ENCODE measurements at regions of chr5 and their contacts with region 1.

Region 1: DNA sequence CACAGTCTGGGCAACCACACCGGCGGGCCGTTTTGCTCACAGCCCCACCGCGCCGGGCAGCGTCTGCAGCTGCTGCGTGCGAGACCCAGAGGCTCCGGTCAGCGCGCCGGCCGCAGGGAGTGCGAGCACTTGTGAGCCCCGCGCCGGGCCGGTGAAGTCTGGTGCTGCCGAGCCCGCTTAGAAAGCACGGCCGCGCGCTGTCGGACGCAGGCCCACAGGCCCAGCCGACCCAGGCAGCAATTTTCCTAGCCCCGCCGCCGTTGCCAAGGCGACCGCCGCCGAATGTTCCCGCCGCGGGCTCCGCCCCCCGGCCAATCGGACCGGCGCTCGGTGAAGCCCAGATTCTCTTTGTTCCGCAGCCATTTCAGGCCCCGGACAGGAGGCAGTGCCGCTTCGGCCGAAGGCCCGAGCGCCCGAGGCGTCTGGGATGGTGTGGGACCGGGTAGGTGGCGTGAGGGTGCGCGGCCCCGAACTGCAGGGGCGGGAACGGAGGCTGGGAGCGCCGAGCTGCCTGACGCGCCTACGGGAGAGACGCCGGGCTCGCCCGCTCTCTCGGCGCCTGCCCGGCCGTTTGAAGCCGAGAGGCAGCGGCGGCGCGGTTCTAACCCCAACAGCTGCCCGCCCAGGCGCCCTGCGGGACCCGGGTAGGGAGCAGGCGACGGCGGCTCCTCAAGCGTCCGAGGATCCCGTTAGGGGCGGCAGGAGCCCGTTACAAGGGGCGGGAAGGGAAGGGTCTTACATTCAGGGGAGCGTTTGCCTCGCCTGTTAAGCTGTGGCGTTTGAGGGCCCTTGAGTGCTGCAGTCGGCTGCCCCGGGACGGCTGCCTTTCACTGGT is at the start of gene TNPO1:
- DNase-seq: peak; percentile 96
- H3K4me3 ChIP-seq: peak within 1 kb of the TSS; percentile 92 to 100 (median 100)
- H3K27ac ChIP-seq: peak within 1 kb of the TSS; percentile 98
- H3K4me1 ChIP-seq: peaks cover 43% of the 10 kb centered on the region
- H3K27me3 ChIP-seq: no peaks in the 10 kb centered on the region
- CTCF ChIP-seq: no peak
- POLR2A ChIP-seq: peak; percentile 99
- total RNA-seq, gene TNPO1: 242 and 298 TPM in 2 replicates

Region 2: DNA sequence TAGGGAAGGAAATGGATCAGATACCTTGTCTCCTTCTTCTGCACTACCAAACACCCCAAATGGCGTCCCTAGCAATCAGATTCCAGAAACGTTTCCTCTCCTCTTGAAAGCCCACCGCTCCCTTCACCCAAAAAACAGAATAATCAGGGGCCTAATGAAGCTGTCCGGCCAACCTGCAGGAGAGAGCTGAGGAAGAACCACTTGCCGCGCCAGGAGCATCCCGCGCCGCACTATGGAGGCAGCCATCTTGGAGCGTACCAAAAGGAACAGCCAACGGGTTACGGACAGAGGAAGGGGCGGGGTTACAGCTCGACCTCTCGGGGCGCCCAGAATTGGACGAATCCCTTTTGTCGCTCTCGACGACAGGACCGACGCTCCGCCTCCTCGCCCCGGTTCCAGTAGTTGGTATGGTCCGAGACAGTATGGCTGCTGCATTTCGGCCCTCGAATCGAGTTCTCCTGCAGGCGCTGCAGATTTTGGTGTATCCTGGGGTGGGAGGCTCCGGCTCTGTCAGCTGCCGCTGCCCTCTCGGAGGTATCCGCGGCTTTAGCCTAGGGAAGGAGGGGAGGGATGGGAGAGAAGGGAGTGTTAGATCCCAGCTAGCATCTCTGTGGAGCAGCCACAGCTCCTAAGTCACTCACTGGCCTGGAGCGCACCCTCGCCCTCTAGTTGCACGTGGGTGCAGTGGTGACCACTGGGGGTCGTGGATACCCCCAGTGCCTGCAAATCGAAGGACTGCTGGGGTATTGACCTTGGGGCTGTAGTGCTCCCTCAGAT is 496.4 kb before region 1 on chr5 and contains the starts of genes MRPS27 and PTCD2:
- CTCF ChIA-PET with region 1: interaction called, 5 read pairs
- POLR2A ChIA-PET with region 1: interaction called, 3 read pairs
- dilution Hi-C with region 1: no loop called
- intact Hi-C with region 1: loop called (anchors 1 kb)
- DNase-seq: peak; percentile 98
- H3K4me3 ChIP-seq: peak within 1 kb of the TSS; percentile 49 to 80 (median 70)
- H3K27ac ChIP-seq: peak within 1 kb of the TSS; percentile 14
- H3K4me1 ChIP-seq: peaks cover 6% of the 10 kb centered on the region
- H3K27me3 ChIP-seq: no peaks in the 10 kb centered on the region
- CTCF ChIP-seq: peak; percentile 8 to 28
- POLR2A ChIP-seq: peak; percentile 97
- total RNA-seq, gene MRPS27: 58.0 and 67.1 TPM in 2 replicates
- total RNA-seq, gene PTCD2: 6.2 and 6.7 TPM in 2 replicates

Region 3: GRCh38 chr5:72597456-72597948 is 219.0 kb before region 1 on chr5:
- CTCF ChIA-PET with region 1: interaction called, 22 read pairs
- POLR2A ChIA-PET with region 1: no interaction called
- dilution Hi-C with region 1: loop called (anchors 25 kb)
- intact Hi-C with region 1: no loop called
- DNase-seq: peak; percentile 94
- H3K4me3 ChIP-seq: no peak overlapping the region
- H3K27ac ChIP-seq: peak overlapping the region; percentile 88
- H3K4me1 ChIP-seq: peaks cover 60% of the 10 kb centered on the region
- H3K27me3 ChIP-seq: no peaks in the 10 kb centered on the region
- CTCF ChIP-seq: no peak
- POLR2A ChIP-seq: no peak

Region 4: GRCh38 chr5:72611118-72611730 is 205.3 kb before region 1 on chr5:
- CTCF ChIA-PET with region 1: interaction called, 134 read pairs
- POLR2A ChIA-PET with region 1: interaction called, 7 read pairs
- dilution Hi-C with region 1: no loop called
- intact Hi-C with region 1: loop called (anchors 1 kb)
- DNase-seq: peak; percentile 85
- H3K4me3 ChIP-seq: no peak overlapping the region
- H3K27ac ChIP-seq: peak overlapping the region; percentile 23
- H3K4me1 ChIP-seq: peaks cover 5% of the 10 kb centered on the region
- H3K27me3 ChIP-seq: no peaks in the 10 kb centered on the region
- CTCF ChIP-seq: peak; percentile 98
- POLR2A ChIP-seq: no peak

Region 5: DNA sequence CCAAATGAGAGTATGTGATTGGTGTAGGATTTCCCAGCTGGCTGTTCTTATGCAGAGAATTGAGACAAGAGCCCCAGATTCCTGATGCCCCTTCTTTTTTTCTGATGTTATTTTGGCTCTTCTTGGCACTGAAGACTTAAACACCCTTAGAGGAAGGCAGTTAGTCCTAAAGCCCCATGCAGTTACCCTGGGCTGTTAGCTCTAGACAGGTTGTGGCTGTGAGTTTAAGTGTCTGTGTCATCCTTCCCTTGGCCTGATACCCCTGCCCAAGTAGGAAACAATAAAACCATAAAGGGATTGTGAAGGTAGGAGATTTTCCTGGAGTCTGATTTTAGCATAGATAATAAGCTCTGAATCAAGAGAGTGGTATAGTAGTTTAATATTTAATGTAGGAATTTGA is 13.2 kb after region 1 on chr5:
- CTCF ChIA-PET with region 1: interaction called, 23 read pairs
- POLR2A ChIA-PET with region 1: no interaction called
- dilution Hi-C with region 1: no loop called
- intact Hi-C with region 1: no loop called
- DNase-seq: no peak
- H3K4me3 ChIP-seq: no peak overlapping the region
- H3K27ac ChIP-seq: no peak overlapping the region
- H3K4me1 ChIP-seq: peaks cover 10% of the 10 kb centered on the region
- H3K27me3 ChIP-seq: no peaks in the 10 kb centered on the region
- CTCF ChIP-seq: no peak
- POLR2A ChIP-seq: no peak

Region 6: DNA sequence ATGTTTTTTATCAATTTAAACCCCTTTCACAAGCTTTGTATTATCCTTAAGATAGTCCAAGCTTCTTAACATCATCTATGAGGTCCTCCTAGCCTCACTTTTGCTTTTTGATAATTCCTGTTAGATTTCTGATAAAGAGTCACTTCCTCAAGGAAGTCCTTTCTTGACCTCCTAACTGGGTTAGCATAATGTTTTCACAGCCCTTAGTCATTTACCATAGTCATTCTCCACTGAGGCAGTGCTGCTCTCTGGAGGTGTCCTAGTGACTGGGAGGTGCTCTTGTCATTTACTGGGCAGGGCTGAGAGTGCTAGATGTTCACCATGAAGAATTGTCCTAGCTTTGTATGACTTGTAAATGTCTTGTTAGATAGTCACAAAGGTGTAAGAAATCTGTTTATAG is 26.3 kb after region 1 on chr5:
- CTCF ChIA-PET with region 1: interaction called, 37 read pairs
- POLR2A ChIA-PET with region 1: interaction called, 4 read pairs
- dilution Hi-C with region 1: no loop called
- intact Hi-C with region 1: loop called (anchors 2 kb)
- DNase-seq: peak; percentile 92
- H3K4me3 ChIP-seq: peak overlapping the region in 1 of 3 experiments; percentile 25
- H3K27ac ChIP-seq: peak overlapping the region; percentile 95
- H3K4me1 ChIP-seq: peaks cover 70% of the 10 kb centered on the region
- H3K27me3 ChIP-seq: no peaks in the 10 kb centered on the region
- CTCF ChIP-seq: peak in 1 of 2 donors; percentile 11
- POLR2A ChIP-seq: no peak

Region 7: GRCh38 chr5:73039086-73039485 is 222.6 kb after region 1 on chr5:
- CTCF ChIA-PET with region 1: no interaction called
- POLR2A ChIA-PET with region 1: no interaction called
- dilution Hi-C with region 1: no loop called
- intact Hi-C with region 1: no loop called
- DNase-seq: no peak
- H3K4me3 ChIP-seq: no peak overlapping the region
- H3K27ac ChIP-seq: no peak overlapping the region
- H3K4me1 ChIP-seq: no peaks in the 10 kb centered on the region
- H3K27me3 ChIP-seq: no peaks in the 10 kb centered on the region
- CTCF ChIP-seq: no peak
- POLR2A ChIP-seq: no peak